ENCODE measurements at regions of chr10 and their contacts with region 1.

Region 1: DNA sequence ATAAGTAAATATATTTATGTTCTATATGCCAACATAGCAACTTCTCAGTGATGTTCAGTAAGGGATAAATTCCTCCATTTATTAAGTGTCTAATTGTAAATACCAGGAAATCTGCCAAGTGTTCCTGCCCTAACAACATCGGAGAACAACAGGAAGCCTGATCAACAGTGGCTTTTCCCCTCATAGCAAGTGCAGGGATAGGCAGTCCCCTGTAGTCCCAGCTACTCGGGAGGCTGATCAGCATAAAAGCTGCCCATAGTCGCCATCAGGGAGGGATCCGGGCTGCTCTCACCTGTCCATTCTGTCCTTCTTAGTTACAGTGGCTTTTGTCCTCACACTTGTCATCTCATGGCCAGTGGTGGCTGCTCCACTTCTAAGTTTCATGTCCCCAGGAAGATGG is 141.3 kb downstream of the IDE start:
- DNase-seq: no peak
- ATAC-seq: no peak
- H3K4me3 ChIP-seq: no peak overlapping the region
- H3K27ac ChIP-seq: no peak overlapping the region
- H3K4me1 ChIP-seq: no peaks in the 10 kb centered on the region
- H3K27me3 ChIP-seq: no peaks in the 10 kb centered on the region
- CTCF ChIP-seq: no peak
- POLR2A ChIP-seq: no peak
- RAD21 ChIP-seq: no peak

Region 2: GRCh38 chr10:91758303-91759146 is 674.1 kb before region 1 on chr10:
- CTCF ChIA-PET with region 1: interaction called, 3 read pairs
- POLR2A ChIA-PET with region 1: no interaction called
- RAD21 ChIA-PET with region 1: no interaction called
- intact Hi-C with region 1: loop called (anchors 2 kb)
- DNase-seq: peak; percentile 65
- ATAC-seq: peak; percentile 86
- H3K4me3 ChIP-seq: no peak overlapping the region
- H3K27ac ChIP-seq: no peak overlapping the region
- H3K4me1 ChIP-seq: no peaks in the 10 kb centered on the region
- H3K27me3 ChIP-seq: no peaks in the 10 kb centered on the region
- CTCF ChIP-seq: peak; percentile 46 to 77 (median 75)
- POLR2A ChIP-seq: no peak
- RAD21 ChIP-seq: peak; percentile 93

Region 3: GRCh38 chr10:91887272-91888076 is 545.1 kb before region 1 on chr10:
- CTCF ChIA-PET with region 1: no interaction called
- POLR2A ChIA-PET with region 1: no interaction called
- RAD21 ChIA-PET with region 1: no interaction called
- intact Hi-C with region 1: no loop called
- DNase-seq: no peak
- ATAC-seq: no peak
- H3K4me3 ChIP-seq: no peak overlapping the region
- H3K27ac ChIP-seq: no peak overlapping the region
- H3K4me1 ChIP-seq: peaks cover 8 to 9% of the 10 kb centered on the region in 2 experiments; a peak in 3 of 4 replicates
- H3K27me3 ChIP-seq: no peaks in the 10 kb centered on the region
- CTCF ChIP-seq: no peak
- POLR2A ChIP-seq: no peak
- RAD21 ChIP-seq: no peak

Region 4: GRCh38 chr10:92062273-92062672 is 370.3 kb before region 1 on chr10:
- CTCF ChIA-PET with region 1: no interaction called
- POLR2A ChIA-PET with region 1: no interaction called
- RAD21 ChIA-PET with region 1: no interaction called
- intact Hi-C with region 1: no loop called
- DNase-seq: no peak
- ATAC-seq: no peak
- H3K4me3 ChIP-seq: no peak overlapping the region
- H3K27ac ChIP-seq: no peak overlapping the region
- H3K4me1 ChIP-seq: no peaks in the 10 kb centered on the region
- H3K27me3 ChIP-seq: no peaks in the 10 kb centered on the region
- CTCF ChIP-seq: no peak
- POLR2A ChIP-seq: no peak
- RAD21 ChIP-seq: no peak

Region 5: GRCh38 chr10:92074126-92074887 is 358.3 kb before region 1 on chr10:
- CTCF ChIA-PET with region 1: interaction called, 6 read pairs
- POLR2A ChIA-PET with region 1: no interaction called
- RAD21 ChIA-PET with region 1: no interaction called
- intact Hi-C with region 1: loop called (anchors 2 kb)
- DNase-seq: peak; percentile 27
- ATAC-seq: peak; percentile 85
- H3K4me3 ChIP-seq: no peak overlapping the region
- H3K27ac ChIP-seq: no peak overlapping the region
- H3K4me1 ChIP-seq: peaks cover 0 to 8% of the 10 kb centered on the region in 2 experiments; a peak in 1 of 4 replicates
- H3K27me3 ChIP-seq: no peaks in the 10 kb centered on the region
- CTCF ChIP-seq: peak; percentile 28 to 59 (median 29); a peak in 4 of 6 replicates
- POLR2A ChIP-seq: no peak
- RAD21 ChIP-seq: peak; percentile 62

Region 6: GRCh38 chr10:92087750-92088395 is 344.7 kb before region 1 on chr10:
- CTCF ChIA-PET with region 1: interaction called, 37 read pairs
- POLR2A ChIA-PET with region 1: interaction called, 3 read pairs
- RAD21 ChIA-PET with region 1: interaction called, 5 to 16 read pairs
- intact Hi-C with region 1: loop called (anchors 1 kb)
- DNase-seq: peak; percentile 78
- ATAC-seq: peak; percentile 100
- H3K4me3 ChIP-seq: no peak overlapping the region
- H3K27ac ChIP-seq: no peak overlapping the region
- H3K4me1 ChIP-seq: peaks cover 3 to 11% of the 10 kb centered on the region in 2 experiments; a peak in 3 of 4 replicates
- H3K27me3 ChIP-seq: no peaks in the 10 kb centered on the region
- CTCF ChIP-seq: peak; percentile 77 to 97 (median 84)
- POLR2A ChIP-seq: no peak
- RAD21 ChIP-seq: peak; percentile 100

Region 7: GRCh38 chr10:92222603-92223275 is 209.9 kb before region 1 on chr10:
- CTCF ChIA-PET with region 1: no interaction called
- POLR2A ChIA-PET with region 1: no interaction called
- RAD21 ChIA-PET with region 1: no interaction called
- intact Hi-C with region 1: loop called (anchors 5 kb)
- DNase-seq: peak; percentile 64
- ATAC-seq: peak; percentile 79
- H3K4me3 ChIP-seq: peak overlapping the region in 1 of 2 experiments; percentile 27; a peak in 2 of 4 replicates
- H3K27ac ChIP-seq: peak overlapping the region; percentile 65; the same call in 1 of the 2 replicates
- H3K4me1 ChIP-seq: peaks cover 53 to 74% of the 10 kb centered on the region in 2 experiments
- H3K27me3 ChIP-seq: no peaks in the 10 kb centered on the region
- CTCF ChIP-seq: no peak
- POLR2A ChIP-seq: no peak
- RAD21 ChIP-seq: peak; percentile 21

Region 8: GRCh38 chr10:92290837-92291615 is 141.6 kb before region 1 on chr10 and contains the starts of genes CPEB3 and MARCHF5:
- CTCF ChIA-PET with region 1: interaction called, 4 read pairs
- POLR2A ChIA-PET with region 1: no interaction called
- RAD21 ChIA-PET with region 1: no interaction called
- intact Hi-C with region 1: loop called (anchors 2 kb)
- DNase-seq: peak; percentile 91
- ATAC-seq: peak; percentile 97
- H3K4me3 ChIP-seq: peak within 1 kb of the TSS; percentile 94 to 97
- H3K27ac ChIP-seq: peak within 1 kb of the TSS; percentile 91
- H3K4me1 ChIP-seq: peaks cover 7 to 14% of the 10 kb centered on the region in 2 experiments
- H3K27me3 ChIP-seq: no peaks in the 10 kb centered on the region
- CTCF ChIP-seq: peak in 2 of 3 experiments; percentile 42 to 56; a peak in 4 of 6 replicates
- POLR2A ChIP-seq: no peak
- RAD21 ChIP-seq: peak; percentile 56
- total RNA-seq, gene CPEB3: 3.0 TPM
- total RNA-seq, gene MARCHF5: 59.1 TPM

Region 9: GRCh38 chr10:92640110-92640509 is 207.5 kb after region 1 on chr10:
- CTCF ChIA-PET with region 1: no interaction called
- POLR2A ChIA-PET with region 1: no interaction called
- RAD21 ChIA-PET with region 1: no interaction called
- intact Hi-C with region 1: no loop called
- DNase-seq: peak; percentile 8
- ATAC-seq: no peak
- H3K4me3 ChIP-seq: no peak overlapping the region
- H3K27ac ChIP-seq: no peak overlapping the region
- H3K4me1 ChIP-seq: peaks cover 6 to 26% of the 10 kb centered on the region in 2 experiments; a peak in 3 of 4 replicates
- H3K27me3 ChIP-seq: no peaks in the 10 kb centered on the region
- CTCF ChIP-seq: no peak
- POLR2A ChIP-seq: no peak
- RAD21 ChIP-seq: no peak

Measured in HCT116 (cell line).